ENCODE measurements at regions of chr6 and their contacts with region 1.

Region 1: GRCh38 chr6:51753635-51754034 is 333.8 kb downstream of the PKHD1 start:
- DNase-seq: peak; percentile 60
- ATAC-seq: peak; percentile 71

Region 2: DNA sequence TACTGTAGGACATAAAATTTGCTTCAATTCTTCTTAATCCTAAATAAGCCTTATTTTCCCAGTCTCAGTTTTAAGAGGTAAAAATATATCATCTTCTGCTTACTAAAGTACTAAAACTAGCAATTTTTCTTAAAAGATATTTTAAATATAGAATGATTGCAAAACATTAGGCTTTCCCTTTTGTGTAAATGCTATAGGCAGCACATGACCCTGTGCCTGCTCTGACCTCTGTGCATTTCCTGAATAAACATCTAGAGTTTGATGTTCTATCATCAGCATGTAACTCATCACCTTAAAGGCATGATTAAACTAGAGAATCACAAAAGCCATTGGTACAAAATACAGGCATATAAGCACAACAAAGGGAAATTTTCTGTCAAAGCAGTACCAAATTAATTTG is 512.3 kb before region 1 on chr6:
- intact Hi-C with region 1: no loop called
- DNase-seq: no peak
- ATAC-seq: no peak

Region 3: GRCh38 chr6:51559059-51559458 is 194.6 kb before region 1 on chr6:
- intact Hi-C with region 1: loop called (anchors 5 kb)
- DNase-seq: no peak
- ATAC-seq: peak; percentile 60

Region 4: GRCh38 chr6:51996296-51996947 is 242.8 kb after region 1 on chr6:
- intact Hi-C with region 1: no loop called
- DNase-seq: no peak
- ATAC-seq: no peak

Measured in Right ventricle myocardium superior (tissue), 1 donor.